H1 (cell line): ENCODE measurements at regions of chr2 and their contacts with region 1.

Region 1: DNA sequence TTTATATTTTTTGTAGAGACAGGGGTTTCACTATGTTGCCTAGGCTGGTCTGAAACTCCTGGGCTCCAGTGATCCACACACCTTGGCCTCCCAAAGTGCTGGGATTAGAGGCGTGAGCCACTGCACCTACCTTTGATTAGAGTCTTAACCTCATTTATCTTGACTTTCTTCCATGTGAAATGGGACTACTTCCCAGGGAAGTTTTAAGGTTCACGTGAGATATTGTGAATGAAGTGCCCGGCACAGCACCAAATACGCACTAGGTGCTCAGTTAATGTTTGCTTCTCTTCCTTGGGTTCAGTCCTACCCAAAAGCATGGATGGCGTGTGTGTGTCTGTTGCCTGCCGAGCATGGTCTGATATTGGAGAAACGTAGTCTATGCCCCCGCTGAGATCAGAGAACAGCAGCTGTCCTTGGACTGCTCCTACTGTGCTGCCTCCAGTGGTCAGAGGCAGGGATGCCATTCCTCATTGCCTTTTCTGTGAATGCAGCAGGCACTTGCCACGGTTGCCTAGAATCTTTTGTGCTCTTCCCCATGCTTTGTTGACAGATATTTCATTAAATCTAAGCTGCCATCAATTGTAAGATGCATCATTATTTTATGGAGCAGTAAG is 12.3 kb upstream of the TFCP2L1 start:
- DNase-seq: no peak
- H3K4me3 ChIP-seq: no peak overlapping the region
- H3K27ac ChIP-seq: no peak overlapping the region
- H3K4me1 ChIP-seq: no peaks in the 10 kb centered on the region
- H3K27me3 ChIP-seq: peaks cover 0 to 1% (median 0%) of the 10 kb centered on the region in 4 experiments; a peak in 1 of 7 replicates
- CTCF ChIP-seq: peak; percentile 48 to 95 (median 95); a peak in 3 of 4 replicates
- EP300 ChIP-seq: no peak
- POLR2A ChIP-seq: no peak
- RAD21 ChIP-seq: peak; percentile 59 to 60

Region 2: DNA sequence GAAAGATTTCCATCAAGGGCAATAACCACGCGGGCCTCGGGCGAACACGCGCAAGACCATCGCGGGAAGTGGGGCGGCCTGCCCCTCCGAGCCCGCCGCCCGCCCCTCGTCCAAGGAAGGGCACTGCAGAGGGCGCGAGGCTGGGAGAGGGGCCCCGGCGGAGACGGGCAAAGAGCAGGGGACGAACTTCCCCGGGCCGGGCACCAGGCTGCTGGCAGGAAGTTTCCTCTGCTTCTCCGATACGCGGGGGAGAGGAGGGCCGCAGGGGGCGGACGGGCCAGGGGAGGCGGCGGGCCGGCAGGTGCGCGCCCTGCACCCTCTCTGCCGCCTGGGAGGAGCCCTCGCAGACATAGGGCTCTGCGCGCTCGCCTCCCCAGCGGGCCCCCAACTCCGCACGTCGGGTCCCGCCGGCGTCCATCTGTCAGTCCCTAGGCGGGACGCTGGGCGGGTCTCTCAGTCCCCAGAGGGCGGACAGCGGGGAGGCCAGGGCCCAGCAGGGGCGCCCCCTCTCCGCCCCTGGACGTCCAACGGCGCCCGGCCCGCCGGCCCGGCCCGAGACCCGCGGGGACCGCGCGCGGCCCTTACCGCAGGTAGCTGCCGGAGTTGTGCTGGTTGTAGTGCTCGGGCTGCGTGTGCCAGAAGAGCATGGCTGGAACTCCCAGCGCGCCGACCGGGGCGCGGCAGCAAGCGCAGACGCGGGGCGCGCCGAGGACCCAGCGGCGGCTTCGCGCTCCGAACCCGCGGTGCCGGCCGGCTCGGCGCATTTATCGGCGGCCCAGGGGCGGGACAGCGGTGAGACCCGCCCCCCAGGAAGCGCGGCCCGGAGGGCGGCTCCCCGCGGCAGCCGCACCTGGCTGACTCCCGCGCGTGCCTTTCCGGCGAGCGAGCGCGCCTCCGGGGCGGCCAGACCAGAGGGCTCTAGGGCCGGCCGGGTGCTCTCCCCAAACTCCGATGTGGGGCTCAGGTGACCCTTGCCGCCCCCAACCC is 12.6 kb before region 1 on chr2 and contains the start of gene TFCP2L1:
- CTCF ChIA-PET with region 1: interaction called, 34 read pairs
- POLR2A ChIA-PET with region 1: no interaction called
- DNase-seq: peak; percentile 27 to 79
- H3K4me3 ChIP-seq: peak within 1 kb of the TSS; percentile 48 to 82 (median 48)
- H3K27ac ChIP-seq: no peak within 1 kb of the TSS
- H3K4me1 ChIP-seq: peaks cover 0 to 3% (median 0%) of the 10 kb centered on the region in 4 experiments; a peak in 1 of 7 replicates
- H3K27me3 ChIP-seq: peaks cover 7 to 37% (median 30%) of the 10 kb centered on the region in 4 experiments
- CTCF ChIP-seq: no peak
- EP300 ChIP-seq: no peak
- POLR2A ChIP-seq: peak in 1 of 2 experiments; percentile 60; a peak in 2 of 3 replicates
- RAD21 ChIP-seq: no peak
- total RNA-seq, gene TFCP2L1: 3.2 and 3.8 TPM in 2 replicates

Region 3: GRCh38 chr2:121309801-121310200 is 12.5 kb after region 1 on chr2:
- CTCF ChIA-PET with region 1: interaction called, 11 read pairs
- POLR2A ChIA-PET with region 1: no interaction called
- DNase-seq: no peak
- H3K4me3 ChIP-seq: no peak overlapping the region
- H3K27ac ChIP-seq: no peak overlapping the region
- H3K4me1 ChIP-seq: no peaks in the 10 kb centered on the region
- H3K27me3 ChIP-seq: no peaks in the 10 kb centered on the region
- CTCF ChIP-seq: no peak
- EP300 ChIP-seq: no peak
- POLR2A ChIP-seq: no peak
- RAD21 ChIP-seq: no peak

Region 4: DNA sequence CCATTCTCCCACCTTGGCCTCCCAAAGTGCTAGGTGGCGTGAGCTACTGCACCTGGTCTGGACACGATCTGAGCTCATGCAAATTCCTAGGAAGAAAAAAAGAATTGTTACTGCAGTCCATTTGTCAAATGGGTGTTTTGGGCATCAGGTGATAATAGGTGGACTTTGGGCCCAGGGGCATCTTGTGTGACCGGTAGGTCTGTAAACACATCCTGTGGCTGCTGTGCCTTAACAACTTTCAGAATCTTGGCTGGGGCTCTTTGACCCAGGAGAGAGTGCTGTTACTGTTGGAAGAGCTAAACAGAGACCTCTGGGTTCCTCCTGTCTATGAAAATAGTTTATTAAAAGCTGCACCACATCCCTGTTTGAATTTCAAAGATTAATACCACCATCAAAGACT is 22.6 kb after region 1 on chr2:
- CTCF ChIA-PET with region 1: interaction called, 38 read pairs
- POLR2A ChIA-PET with region 1: no interaction called
- DNase-seq: no peak
- H3K4me3 ChIP-seq: no peak overlapping the region
- H3K27ac ChIP-seq: no peak overlapping the region
- H3K4me1 ChIP-seq: no peaks in the 10 kb centered on the region
- H3K27me3 ChIP-seq: no peaks in the 10 kb centered on the region
- CTCF ChIP-seq: no peak
- EP300 ChIP-seq: no peak
- POLR2A ChIP-seq: no peak
- RAD21 ChIP-seq: no peak